GM12878 (cell line): ENCODE measurements at regions of chr10 and their contacts with region 1.

Region 1: DNA sequence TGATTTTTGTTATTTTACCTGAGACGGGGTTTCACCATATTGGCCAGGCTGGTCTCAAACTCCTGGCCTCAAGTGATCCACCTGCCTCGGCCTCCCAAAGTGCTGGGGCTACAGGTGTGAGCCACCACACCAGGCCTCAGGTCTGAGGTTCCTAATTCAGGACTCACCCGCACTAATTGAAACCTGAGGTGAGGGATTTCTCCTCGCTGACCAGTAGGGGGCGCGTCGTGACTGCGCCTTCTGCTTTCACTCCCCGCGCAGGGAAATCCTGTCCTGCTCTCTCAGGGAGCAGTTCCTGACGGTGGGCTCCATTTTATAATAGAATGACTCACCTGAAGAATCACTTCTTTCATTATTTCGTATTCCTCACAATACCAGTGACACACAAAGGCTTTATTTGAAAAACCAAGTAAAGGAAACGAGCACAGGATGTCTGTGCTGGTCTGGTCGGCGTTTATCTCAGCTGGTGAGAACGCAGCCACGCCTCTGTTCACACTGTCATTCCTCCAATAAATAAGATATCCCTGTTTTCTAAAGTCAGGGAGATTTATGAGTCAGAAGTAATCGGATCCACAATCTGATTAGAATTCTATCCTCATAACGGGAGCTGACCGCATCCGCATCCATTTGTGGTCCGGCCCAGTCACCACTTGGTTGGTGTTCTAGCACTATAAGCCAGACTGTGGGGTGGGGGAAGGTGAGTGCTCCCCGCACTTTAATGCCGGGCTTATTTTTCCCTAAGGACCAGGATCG is 35.4 kb downstream of the BAG3 start:
- DNase-seq: no peak
- ATAC-seq: peak; percentile 87
- H3K4me3 ChIP-seq: no peak overlapping the region
- H3K27ac ChIP-seq: no peak overlapping the region
- H3K4me1 ChIP-seq: no peaks in the 10 kb centered on the region
- H3K27me3 ChIP-seq: no peaks in the 10 kb centered on the region
- CTCF ChIP-seq: peak; percentile 84 to 92 (median 86)
- EP300 ChIP-seq: no peak
- POLR2A ChIP-seq: no peak
- RAD21 ChIP-seq: peak; percentile 96

Region 2: DNA sequence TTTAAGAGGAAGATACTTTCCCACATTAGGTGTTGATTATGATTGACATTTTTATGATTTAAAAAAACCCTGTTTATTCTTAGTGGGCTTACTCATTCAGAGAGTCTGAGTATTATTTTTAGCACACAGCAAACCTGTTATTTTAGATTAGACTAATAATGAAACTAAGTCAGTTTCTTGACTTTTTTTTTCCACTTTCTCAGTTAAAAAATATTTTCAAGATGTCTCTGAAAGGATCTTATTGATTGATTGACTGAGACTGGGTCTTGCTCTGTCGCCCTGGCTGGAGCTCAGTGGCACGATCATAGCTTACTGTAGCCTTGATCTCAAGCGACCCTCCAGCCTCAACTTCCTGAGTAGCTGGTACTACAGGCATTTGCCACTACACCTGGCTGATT is 18.8 kb after region 1 on chr10:
- CTCF ChIA-PET with region 1: interaction called, 45 read pairs
- POLR2A ChIA-PET with region 1: interaction called, 17 read pairs
- RAD21 ChIA-PET with region 1: interaction called, 26 read pairs
- SMC1A ChIA-PET with region 1: interaction called, 47 read pairs
- in situ Hi-C with region 1: no loop called
- intact Hi-C with region 1: loop called (anchors 2 kb)
- DNase-seq: peak; percentile 76
- ATAC-seq: peak; percentile 40
- H3K4me3 ChIP-seq: no peak overlapping the region; the same call in 1 of the 2 replicates
- H3K27ac ChIP-seq: peak overlapping the region; percentile 92
- H3K4me1 ChIP-seq: peaks cover 72% of the 10 kb centered on the region
- H3K27me3 ChIP-seq: no peaks in the 10 kb centered on the region
- CTCF ChIP-seq: no peak
- EP300 ChIP-seq: peak; percentile 94 to 100
- POLR2A ChIP-seq: no peak
- RAD21 ChIP-seq: no peak

Region 3: DNA sequence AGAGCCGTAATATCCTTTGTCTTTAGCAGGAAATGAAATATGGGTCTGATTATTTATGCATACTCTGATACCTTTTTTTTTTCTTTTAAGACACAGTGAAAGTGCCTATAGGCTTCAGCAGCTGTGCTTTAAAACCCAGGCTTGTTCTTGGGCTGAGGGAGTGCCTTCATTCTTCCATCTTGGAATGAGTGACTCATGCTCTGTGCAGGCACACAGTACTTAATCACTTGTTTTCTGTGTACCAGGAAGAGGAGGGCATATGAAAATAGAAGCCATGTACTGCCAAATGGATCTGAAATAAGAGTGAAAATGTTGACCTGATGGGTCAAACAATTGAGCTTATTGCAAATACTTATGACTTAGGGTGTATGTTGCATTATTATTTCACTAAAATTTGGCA is 51.2 kb after region 1 on chr10:
- CTCF ChIA-PET with region 1: interaction called, 19 read pairs
- POLR2A ChIA-PET with region 1: interaction called, 5 read pairs
- RAD21 ChIA-PET with region 1: interaction called, 19 read pairs
- SMC1A ChIA-PET with region 1: interaction called, 13 read pairs
- in situ Hi-C with region 1: no loop called
- intact Hi-C with region 1: no loop called
- DNase-seq: no peak
- ATAC-seq: peak; percentile 39
- H3K4me3 ChIP-seq: no peak overlapping the region
- H3K27ac ChIP-seq: no peak overlapping the region
- H3K4me1 ChIP-seq: no peaks in the 10 kb centered on the region
- H3K27me3 ChIP-seq: no peaks in the 10 kb centered on the region
- CTCF ChIP-seq: no peak
- EP300 ChIP-seq: no peak
- POLR2A ChIP-seq: no peak
- RAD21 ChIP-seq: no peak

Region 4: GRCh38 chr10:119769886-119770285 is 83.3 kb after region 1 on chr10:
- CTCF ChIA-PET with region 1: no interaction called
- POLR2A ChIA-PET with region 1: no interaction called
- RAD21 ChIA-PET with region 1: no interaction called
- SMC1A ChIA-PET with region 1: interaction called, 17 read pairs
- in situ Hi-C with region 1: no loop called
- intact Hi-C with region 1: no loop called
- DNase-seq: no peak
- ATAC-seq: no peak
- H3K4me3 ChIP-seq: no peak overlapping the region
- H3K27ac ChIP-seq: no peak overlapping the region
- H3K4me1 ChIP-seq: no peaks in the 10 kb centered on the region
- H3K27me3 ChIP-seq: no peaks in the 10 kb centered on the region
- CTCF ChIP-seq: no peak
- EP300 ChIP-seq: no peak
- POLR2A ChIP-seq: no peak
- RAD21 ChIP-seq: no peak

Region 5: DNA sequence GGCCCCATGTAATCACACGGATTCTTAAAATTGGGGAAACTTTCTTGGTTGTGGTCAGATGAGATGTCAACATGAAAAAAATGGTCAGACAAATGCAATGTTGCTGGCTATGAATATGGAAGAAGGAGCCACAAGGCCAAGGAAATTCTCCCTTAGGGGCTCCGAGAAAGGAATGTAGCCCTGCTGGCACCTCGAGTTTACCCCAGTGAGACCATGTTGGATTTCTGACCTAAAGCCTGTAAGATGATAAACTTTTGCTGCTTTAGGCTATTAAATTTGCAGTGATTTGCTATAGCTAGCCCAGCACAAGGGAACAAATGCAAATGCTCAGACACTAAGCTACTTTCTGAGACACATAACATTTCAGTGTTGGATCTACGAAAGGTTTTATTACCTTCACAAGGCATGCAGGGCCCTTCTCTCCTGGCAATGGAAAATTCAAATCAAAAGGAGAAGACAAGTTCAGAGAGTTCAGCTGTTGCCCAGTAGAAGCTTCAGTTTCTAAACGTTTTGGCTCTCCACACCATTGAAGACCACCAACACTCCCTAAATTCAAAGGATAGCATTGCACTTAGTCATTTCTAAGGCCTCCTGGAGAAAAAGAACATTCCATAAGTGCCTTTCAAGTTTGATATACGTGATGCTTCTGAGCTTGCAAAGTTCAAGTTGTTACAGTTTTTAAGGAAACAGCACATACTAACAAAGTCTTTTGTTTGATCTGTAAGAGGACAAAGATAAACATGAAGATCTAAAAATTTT is 162.6 kb after region 1 on chr10:
- CTCF ChIA-PET with region 1: interaction called, 16 read pairs
- POLR2A ChIA-PET with region 1: no interaction called
- RAD21 ChIA-PET with region 1: interaction called, 4 read pairs
- SMC1A ChIA-PET with region 1: interaction called, 7 read pairs
- in situ Hi-C with region 1: no loop called
- intact Hi-C with region 1: no loop called
- DNase-seq: no peak
- ATAC-seq: no peak
- H3K4me3 ChIP-seq: no peak overlapping the region
- H3K27ac ChIP-seq: no peak overlapping the region
- H3K4me1 ChIP-seq: no peaks in the 10 kb centered on the region
- H3K27me3 ChIP-seq: no peaks in the 10 kb centered on the region
- CTCF ChIP-seq: no peak
- EP300 ChIP-seq: no peak
- POLR2A ChIP-seq: no peak
- RAD21 ChIP-seq: no peak

Region 6: DNA sequence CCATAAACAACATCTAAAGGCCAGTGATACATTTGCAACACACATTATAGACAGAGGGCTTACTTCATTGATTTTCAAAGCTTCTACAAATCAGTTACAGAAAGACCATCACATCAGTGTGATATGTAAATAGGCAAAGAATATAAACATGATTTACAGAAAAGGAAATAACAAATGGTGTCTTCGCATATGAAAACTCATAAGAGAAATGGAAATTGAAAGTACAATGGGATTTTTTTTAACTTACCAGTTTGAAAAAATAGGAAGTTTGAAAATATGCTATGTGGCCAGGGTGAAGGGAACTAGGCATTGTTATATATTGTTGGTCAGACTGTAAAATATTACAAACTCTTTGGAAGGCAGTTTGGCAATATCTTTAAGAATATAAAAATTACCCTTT is 233.2 kb after region 1 on chr10:
- CTCF ChIA-PET with region 1: interaction called, 11 read pairs
- POLR2A ChIA-PET with region 1: interaction called, 4 read pairs
- RAD21 ChIA-PET with region 1: interaction called, 3 read pairs
- SMC1A ChIA-PET with region 1: interaction called, 4 read pairs
- in situ Hi-C with region 1: no loop called
- intact Hi-C with region 1: loop called (anchors 5 kb)
- DNase-seq: peak; percentile 13
- ATAC-seq: peak; percentile 86
- H3K4me3 ChIP-seq: 0 out of 2 replicates have a peak overlapping the region, but pooled peaks have one; percentile 10
- H3K27ac ChIP-seq: peak overlapping the region; percentile 75
- H3K4me1 ChIP-seq: peaks cover 8% of the 10 kb centered on the region
- H3K27me3 ChIP-seq: no peaks in the 10 kb centered on the region
- CTCF ChIP-seq: no peak
- EP300 ChIP-seq: no peak
- POLR2A ChIP-seq: no peak
- RAD21 ChIP-seq: no peak